ENCODE measurements at regions of chr2 and their contacts with region 1.

Region 1: DNA sequence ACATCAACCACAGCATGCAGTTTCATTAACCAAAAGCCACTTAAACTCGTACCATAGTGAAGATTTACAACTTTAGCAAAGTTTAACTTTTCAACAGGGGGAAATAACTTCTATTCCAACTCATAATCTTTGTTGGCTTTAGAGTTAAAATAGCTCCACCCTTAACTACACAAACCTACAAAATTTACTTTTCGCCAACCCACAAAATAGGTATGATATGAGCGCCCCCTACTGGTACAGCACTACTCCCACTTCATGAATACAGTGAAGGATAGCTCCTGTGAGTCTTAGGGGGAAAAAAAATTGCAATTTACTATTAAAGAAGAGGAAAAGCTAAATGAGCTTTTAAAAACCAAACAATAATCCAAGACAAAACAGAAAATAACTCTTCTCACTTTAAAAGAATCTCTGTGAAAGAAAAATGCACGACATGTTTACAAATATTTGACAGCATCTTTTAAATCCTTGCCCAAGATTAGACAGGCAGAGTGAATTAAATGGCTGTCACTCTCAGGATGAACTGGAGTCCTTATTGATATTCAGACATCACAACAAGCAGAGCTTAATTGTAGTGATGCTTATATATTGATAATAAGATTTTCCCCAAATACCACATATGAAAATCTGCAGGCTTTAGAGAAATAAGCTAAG is 32.2 kb downstream of the TMEFF2 start:
- DNase-seq: peak; percentile 71 to 87 (median 80)
- H3K4me3 ChIP-seq: peak overlapping the region in 4 of 7 experiments; percentile 13 to 62 (median 24)
- H3K27ac ChIP-seq: no peak overlapping the region
- H3K4me1 ChIP-seq: peaks cover 0 to 12% (median 9%) of the 10 kb centered on the region in 4 experiments
- H3K27me3 ChIP-seq: no peaks in the 10 kb centered on the region

Region 2: GRCh38 chr2:191555092-191555742 is 607.3 kb before region 1 on chr2:
- CTCF ChIA-PET with region 1: interaction called, 19 read pairs
- POLR2A ChIA-PET with region 1: no interaction called
- DNase-seq: peak; percentile 81 to 89 (median 83)
- H3K4me3 ChIP-seq: peak overlapping the region in 1 of 7 experiments; percentile 57
- H3K27ac ChIP-seq: no peak overlapping the region
- H3K4me1 ChIP-seq: peaks cover 0 to 3% (median 1%) of the 10 kb centered on the region in 4 experiments
- H3K27me3 ChIP-seq: no peaks in the 10 kb centered on the region

Region 3: GRCh38 chr2:191806396-191806795 is 356.1 kb before region 1 on chr2:
- CTCF ChIA-PET with region 1: interaction called, 195 read pairs
- POLR2A ChIA-PET with region 1: no interaction called
- DNase-seq: peak in 2 of 3 donors; percentile 26 to 29
- H3K4me3 ChIP-seq: no peak overlapping the region
- H3K27ac ChIP-seq: no peak overlapping the region
- H3K4me1 ChIP-seq: peaks cover 0 to 3% (median 0%) of the 10 kb centered on the region in 4 experiments
- H3K27me3 ChIP-seq: no peaks in the 10 kb centered on the region

Region 4: GRCh38 chr2:191818725-191819350 is 343.7 kb before region 1 on chr2:
- CTCF ChIA-PET with region 1: interaction called, 195 read pairs
- POLR2A ChIA-PET with region 1: no interaction called
- DNase-seq: peak in 2 of 3 donors; percentile 30 to 46
- H3K4me3 ChIP-seq: peak overlapping the region in 1 of 7 experiments; percentile 25
- H3K27ac ChIP-seq: no peak overlapping the region
- H3K4me1 ChIP-seq: no peaks in the 10 kb centered on the region
- H3K27me3 ChIP-seq: no peaks in the 10 kb centered on the region

Region 5: DNA sequence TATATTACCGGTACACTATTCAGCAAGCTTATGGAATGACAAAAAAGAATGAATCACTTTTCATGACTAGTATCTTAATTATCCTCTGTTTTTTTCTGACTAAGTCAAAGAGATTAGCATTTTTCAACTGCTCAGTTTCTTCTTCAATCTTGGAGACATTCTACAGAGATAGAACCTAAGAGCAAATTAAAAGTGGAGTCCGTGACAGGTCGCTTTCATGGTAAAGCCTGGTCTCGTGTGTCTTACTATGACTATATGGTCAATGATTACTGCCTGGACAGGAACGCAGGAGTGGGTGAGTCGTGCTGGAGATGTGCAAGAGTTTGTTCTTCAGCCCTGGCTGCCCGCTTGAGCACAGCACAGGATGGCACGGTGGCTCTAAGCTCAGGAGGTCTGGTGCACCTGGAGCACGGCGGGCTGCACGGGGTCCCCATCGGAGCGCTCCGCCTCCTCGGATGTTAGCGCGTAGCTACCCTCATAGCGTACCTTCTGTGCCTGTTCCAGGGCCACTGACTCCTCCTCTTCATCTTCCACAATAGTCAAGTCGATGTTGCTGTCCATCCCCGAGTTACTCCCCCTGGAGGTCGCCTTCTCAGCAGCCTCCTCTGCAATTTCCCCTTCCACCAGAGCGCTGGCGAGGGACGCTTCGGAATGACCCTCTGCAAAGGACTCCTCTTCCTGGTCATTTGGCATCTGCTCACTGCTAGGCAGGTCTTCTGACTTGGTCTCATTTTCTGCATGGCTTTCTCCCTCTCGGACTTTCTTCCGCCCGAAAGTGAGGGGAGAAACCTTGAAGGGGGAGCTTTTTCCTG is 326.8 kb before region 1 on chr2:
- CTCF ChIA-PET with region 1: interaction called, 11 read pairs
- POLR2A ChIA-PET with region 1: no interaction called
- DNase-seq: no peak
- H3K4me3 ChIP-seq: no peak overlapping the region
- H3K27ac ChIP-seq: peak overlapping the region in 1 of 2 experiments; percentile 86
- H3K4me1 ChIP-seq: peaks cover 13 to 58% (median 37%) of the 10 kb centered on the region in 4 experiments
- H3K27me3 ChIP-seq: no peaks in the 10 kb centered on the region

Region 6: DNA sequence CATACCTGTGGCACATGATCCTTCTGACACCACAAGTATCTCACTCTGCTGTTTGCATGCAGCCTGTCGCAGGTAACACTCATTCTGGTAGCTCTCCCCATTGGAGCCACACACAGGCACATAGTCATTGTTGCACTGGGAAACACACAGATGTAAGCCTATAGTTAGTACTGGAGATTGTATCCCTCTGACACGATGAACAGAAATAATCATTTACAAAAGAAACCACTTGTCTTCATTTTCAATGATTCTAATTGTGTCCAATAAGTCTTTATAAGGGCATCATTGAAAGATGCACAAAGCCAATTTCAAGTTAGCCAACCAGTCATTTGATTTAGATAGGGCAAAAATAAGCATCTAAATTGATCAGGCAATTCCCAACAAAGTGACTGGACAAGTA is 21.8 kb after region 1 on chr2:
- CTCF ChIA-PET with region 1: no interaction called
- POLR2A ChIA-PET with region 1: no interaction called
- DNase-seq: no peak
- H3K4me3 ChIP-seq: no peak overlapping the region
- H3K27ac ChIP-seq: no peak overlapping the region
- H3K4me1 ChIP-seq: peaks cover 0 to 10% (median 0%) of the 10 kb centered on the region in 4 experiments
- H3K27me3 ChIP-seq: no peaks in the 10 kb centered on the region